ENCODE measurements at regions of chr12 and their contacts with region 1.

Region 1: DNA sequence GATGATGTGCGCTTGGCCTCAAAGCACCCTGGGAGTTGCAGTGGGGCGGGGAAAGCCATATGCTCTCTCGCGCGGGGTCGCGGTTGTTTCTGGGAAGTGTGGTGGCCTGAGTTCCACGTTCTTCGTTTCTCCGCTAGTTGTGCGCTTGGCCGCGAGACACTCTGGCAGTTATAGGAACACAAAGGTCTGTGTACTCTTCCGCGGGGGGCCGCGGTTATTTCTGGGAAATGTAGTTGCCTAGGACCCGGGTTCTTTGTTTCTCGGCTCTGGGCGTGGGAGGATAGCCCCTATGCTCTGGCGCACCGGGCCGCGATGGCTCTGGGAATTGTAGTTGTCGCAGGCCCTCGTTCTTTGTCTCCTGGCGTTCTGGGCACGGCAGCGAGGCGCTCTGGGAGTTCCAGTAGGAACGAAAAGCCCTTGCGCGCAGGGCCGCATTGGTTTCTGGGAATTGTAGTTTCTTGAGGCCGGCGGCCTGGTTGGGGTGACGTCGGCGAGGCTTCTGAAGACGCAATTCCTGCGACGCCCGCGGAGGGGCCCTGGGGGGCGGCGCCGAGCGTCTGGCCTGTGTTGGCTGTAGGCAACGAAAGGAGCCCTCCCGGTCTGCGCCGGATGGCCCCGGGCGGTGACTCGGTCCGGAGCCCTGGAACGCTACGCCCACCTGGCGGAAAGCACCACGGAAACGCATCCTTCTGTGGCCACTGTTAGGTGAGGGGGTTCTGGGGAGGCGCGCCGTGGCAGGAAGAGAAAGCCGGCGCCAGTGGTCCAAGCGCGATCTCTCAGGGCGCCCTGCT is at the start of gene ZNF140:
- DNase-seq: peak; percentile 97
- ATAC-seq: peak; percentile 85 to 91
- total RNA-seq, gene ZNF140: 7.4 to 10.6 TPM

Region 2: DNA sequence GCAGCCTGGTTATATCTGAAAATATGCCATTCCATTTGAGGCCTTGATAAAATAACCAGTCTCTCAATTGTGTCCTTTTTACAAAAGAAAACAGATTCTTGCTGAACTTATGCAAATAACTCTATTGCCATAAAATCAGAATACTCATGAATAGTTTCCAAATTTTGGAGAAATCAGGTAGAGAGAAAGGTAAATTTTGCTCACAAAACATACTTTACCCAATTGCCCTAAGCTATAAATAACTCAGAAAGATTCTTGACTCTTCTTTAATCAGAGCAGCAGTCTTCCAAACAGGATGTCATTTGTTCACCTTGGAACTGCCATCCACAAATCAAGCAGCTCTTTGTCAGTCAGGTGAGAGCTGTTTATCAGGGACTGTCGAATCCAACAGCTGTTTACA is 81.8 kb before region 1 on chr12:
- intact Hi-C with region 1: no loop called
- DNase-seq: no peak
- ATAC-seq: no peak

Region 3: GRCh38 chr12:133037207-133038005 is 43.2 kb before region 1 on chr12 and contains the start of gene ZNF84:
- intact Hi-C with region 1: loop called in 1 of 2 experiments (anchors 2 kb)
- DNase-seq: peak; percentile 98
- ATAC-seq: peak; percentile 99
- total RNA-seq, gene ZNF84: 15.5 to 18.3 TPM

Region 4: DNA sequence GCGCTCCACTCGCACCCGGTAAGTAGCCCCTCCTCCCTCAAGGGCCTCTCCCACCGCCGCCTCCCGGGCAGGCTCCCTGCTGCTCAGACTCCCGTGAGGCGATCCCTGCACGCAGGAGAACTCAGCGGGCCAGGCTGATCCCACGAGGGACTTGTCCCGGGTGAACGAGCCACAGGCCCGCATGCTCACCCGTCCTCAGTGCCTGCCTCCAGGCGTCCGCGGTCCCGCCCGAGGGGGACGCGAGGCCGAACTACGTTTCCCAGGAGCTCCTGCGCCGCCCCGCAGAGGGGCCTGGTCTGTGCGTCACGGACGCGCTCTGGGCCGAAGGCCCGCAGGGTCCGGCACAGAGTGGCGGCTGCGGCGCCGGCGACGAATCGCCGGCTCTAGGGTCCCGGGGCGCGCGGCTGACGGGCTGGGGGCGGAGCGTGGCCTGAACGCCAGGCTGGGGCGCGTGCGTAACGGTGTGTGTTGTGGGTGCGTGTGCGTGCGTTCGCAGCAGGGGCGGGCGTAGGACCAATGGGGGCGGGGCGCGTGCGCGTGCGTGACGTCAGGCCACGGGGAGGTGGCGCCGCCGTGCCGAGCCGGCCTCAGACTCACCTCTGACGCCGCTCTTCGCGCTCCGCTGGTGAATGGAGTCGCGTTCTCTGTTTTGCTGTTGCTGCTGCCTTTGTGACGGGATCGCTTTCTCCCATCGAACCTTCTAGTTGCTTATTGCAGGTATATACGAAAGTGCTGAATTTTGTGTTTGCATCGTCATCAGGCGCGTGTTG is 49.7 kb after region 1 on chr12 and contains the starts of genes ZNF10 and ZNF891:
- intact Hi-C with region 1: loop called in 1 of 2 experiments (anchors 2 kb)
- DNase-seq: peak; percentile 97
- ATAC-seq: peak; percentile 97 to 99
- total RNA-seq, gene ZNF10: 5.8 to 10.2 TPM
- total RNA-seq, gene ZNF891: 1.2 to 1.3 TPM